Adrenal gland (tissue), 19 donors: ENCODE measurements at regions of chr3 and their contacts with region 1.

Region 1: DNA sequence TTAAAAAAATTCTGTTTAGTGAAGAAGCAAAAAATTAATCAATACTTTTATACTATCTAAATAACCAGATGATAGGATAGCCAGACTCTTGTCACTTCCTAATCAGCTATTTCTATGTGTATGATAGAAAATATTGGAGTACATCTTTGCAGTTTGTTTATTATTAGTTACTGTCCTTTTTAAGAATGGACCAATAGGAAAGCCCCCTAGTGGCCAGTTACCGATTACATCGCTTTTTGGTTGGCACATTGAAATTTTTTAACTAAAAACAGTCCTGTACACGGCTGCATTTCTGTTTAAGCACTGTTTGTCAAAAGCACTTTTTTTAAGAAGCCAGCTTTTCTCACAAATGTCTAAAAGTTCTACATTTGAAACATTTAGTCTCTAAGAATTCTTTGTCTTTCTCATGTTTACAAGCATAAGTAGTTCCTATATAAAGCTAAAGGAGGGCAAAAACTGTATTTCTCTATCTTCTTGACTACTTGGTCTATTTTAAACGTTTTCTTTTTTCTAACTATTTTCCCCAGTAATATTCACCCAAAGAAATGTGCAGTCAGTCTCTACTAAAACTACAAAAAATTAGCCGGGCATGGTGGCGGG is 253.2 kb upstream of the LRTM1 start:
- DNase-seq: peak; percentile 20 to 68 (median 44)
- H3K4me3 ChIP-seq: no peak overlapping the region
- H3K27ac ChIP-seq: no peak overlapping the region
- H3K4me1 ChIP-seq: no peaks in the 10 kb centered on the region
- H3K27me3 ChIP-seq: peaks cover 4% of the 10 kb centered on the region
- CTCF ChIP-seq: peak; percentile 56 to 83 (median 66)
- POLR2A ChIP-seq: no peak

Region 2: GRCh38 chr3:54859184-54859583 is 321.9 kb before region 1 on chr3:
- intact Hi-C with region 1: loop called in 1 of 2 experiments (anchors 5 kb)
- DNase-seq: no peak
- H3K4me3 ChIP-seq: no peak overlapping the region
- H3K27ac ChIP-seq: no peak overlapping the region
- H3K4me1 ChIP-seq: peaks cover 3 to 27% of the 10 kb centered on the region in 2 donors
- H3K27me3 ChIP-seq: no peaks in the 10 kb centered on the region
- CTCF ChIP-seq: no peak
- POLR2A ChIP-seq: no peak

Region 3: DNA sequence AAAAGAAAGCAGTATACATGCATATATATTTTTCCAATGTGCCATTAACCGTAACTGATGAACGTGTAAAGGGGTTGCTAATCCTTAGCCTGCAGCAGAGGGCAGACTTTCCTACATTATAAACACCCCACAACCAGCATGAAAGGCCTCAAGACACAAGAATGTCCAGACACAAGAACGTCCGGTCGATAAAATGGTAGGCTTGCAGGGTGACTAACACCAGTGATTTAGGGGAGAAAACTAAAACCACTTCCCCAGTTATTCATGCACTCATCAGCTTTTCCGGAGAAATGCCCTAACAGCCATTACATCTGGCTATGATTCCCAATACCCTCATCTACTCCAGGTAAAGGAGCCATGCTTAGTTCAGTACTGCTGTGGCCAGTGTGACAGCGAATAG is 310.6 kb before region 1 on chr3:
- intact Hi-C with region 1: loop called in 1 of 2 experiments (anchors 5 kb)
- DNase-seq: peak in 6 of 7 donors; percentile 37 to 78 (median 58)
- H3K4me3 ChIP-seq: no peak overlapping the region
- H3K27ac ChIP-seq: no peak overlapping the region
- H3K4me1 ChIP-seq: peaks cover 7% of the 10 kb centered on the region in 2 donors
- H3K27me3 ChIP-seq: no peaks in the 10 kb centered on the region
- CTCF ChIP-seq: peak; percentile 29 to 79 (median 69)
- POLR2A ChIP-seq: no peak

Region 4: DNA sequence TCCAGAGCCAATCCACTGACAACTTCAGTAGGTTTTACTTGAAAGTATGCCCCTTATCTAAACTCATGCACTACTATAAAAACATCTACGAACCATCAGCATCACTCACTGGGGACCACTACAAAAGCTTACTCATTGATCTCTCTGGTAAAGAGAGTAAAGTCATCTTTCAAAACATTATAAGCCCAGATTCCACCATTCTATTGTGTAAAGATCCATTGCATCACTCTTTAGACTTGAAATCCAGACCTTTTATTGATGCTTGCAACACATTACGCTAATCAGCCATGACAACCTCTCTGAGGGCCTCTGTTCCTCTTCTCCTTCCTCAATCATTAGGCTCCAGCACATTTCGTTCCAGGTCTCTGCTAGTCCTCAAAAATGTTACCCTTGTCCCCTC is 554.9 kb after region 1 on chr3:
- intact Hi-C with region 1: no loop called
- DNase-seq: no peak
- H3K4me3 ChIP-seq: no peak overlapping the region
- H3K27ac ChIP-seq: no peak overlapping the region
- H3K4me1 ChIP-seq: no peaks in the 10 kb centered on the region
- H3K27me3 ChIP-seq: no peaks in the 10 kb centered on the region
- CTCF ChIP-seq: no peak
- POLR2A ChIP-seq: no peak